ENCODE measurements at regions of chr1 and their contacts with region 1.

Region 1: GRCh38 chr1:205430696-205431305 is 8.9 kb upstream of the LEMD1 start:
- DNase-seq: peak; percentile 75
- H3K4me3 Mint-ChIP-seq: peak overlapping the region; percentile 78
- H3K27ac Mint-ChIP-seq: no peak overlapping the region
- H3K4me1 Mint-ChIP-seq: peaks cover 9% of the 10 kb centered on the region
- H3K27me3 Mint-ChIP-seq: no peaks in the 10 kb centered on the region

Region 2: DNA sequence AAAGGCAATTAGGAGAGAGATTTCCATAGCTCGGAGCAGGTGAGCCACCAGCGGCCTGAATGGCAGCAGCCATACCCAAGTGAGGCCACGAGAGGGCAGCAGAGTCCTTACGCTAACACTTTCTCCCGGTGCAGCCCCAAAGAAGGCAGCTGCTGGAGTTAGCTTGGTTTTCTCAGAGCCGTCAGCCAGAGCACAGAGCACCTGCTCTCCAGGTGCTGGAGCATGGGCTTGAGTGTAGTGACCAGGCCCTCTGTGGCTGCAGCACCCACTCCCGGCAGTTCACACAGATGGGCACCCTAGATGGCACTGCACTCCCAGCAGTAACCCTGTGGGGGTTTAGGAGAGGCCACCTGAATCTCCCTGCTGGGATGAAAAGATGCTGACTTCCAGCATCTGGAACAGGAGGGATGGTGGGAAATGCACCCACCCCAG is 157.2 kb before region 1 on chr1:
- CTCF ChIA-PET with region 1: no interaction called
- intact Hi-C with region 1: loop called (anchors 5 kb)
- DNase-seq: peak; percentile 94
- H3K4me3 Mint-ChIP-seq: no peak overlapping the region
- H3K27ac Mint-ChIP-seq: peak overlapping the region; percentile 27
- H3K4me1 Mint-ChIP-seq: peaks cover 51% of the 10 kb centered on the region
- H3K27me3 Mint-ChIP-seq: no peaks in the 10 kb centered on the region

Region 3: GRCh38 chr1:205335643-205336091 is 95.1 kb before region 1 on chr1:
- CTCF ChIA-PET with region 1: interaction called, 5 read pairs
- intact Hi-C with region 1: loop called (anchors 1 kb)
- DNase-seq: peak; percentile 92
- H3K4me3 Mint-ChIP-seq: no peak overlapping the region
- H3K27ac Mint-ChIP-seq: no peak overlapping the region
- H3K4me1 Mint-ChIP-seq: no peaks in the 10 kb centered on the region
- H3K27me3 Mint-ChIP-seq: no peaks in the 10 kb centered on the region

Region 4: GRCh38 chr1:205354259-205354904 is 76.4 kb before region 1 on chr1:
- CTCF ChIA-PET with region 1: interaction called, 12 read pairs
- intact Hi-C with region 1: no loop called
- DNase-seq: peak; percentile 82
- H3K4me3 Mint-ChIP-seq: no peak overlapping the region
- H3K27ac Mint-ChIP-seq: no peak overlapping the region
- H3K4me1 Mint-ChIP-seq: no peaks in the 10 kb centered on the region
- H3K27me3 Mint-ChIP-seq: no peaks in the 10 kb centered on the region

Region 5: GRCh38 chr1:205396967-205397616 is 33.7 kb before region 1 on chr1:
- CTCF ChIA-PET with region 1: interaction called, 7 read pairs
- intact Hi-C with region 1: loop called (anchors 1 kb)
- DNase-seq: peak; percentile 43
- H3K4me3 Mint-ChIP-seq: no peak overlapping the region
- H3K27ac Mint-ChIP-seq: no peak overlapping the region
- H3K4me1 Mint-ChIP-seq: no peaks in the 10 kb centered on the region
- H3K27me3 Mint-ChIP-seq: peaks cover 10% of the 10 kb centered on the region

Region 6: GRCh38 chr1:205472737-205473441 is 42.1 kb after region 1 on chr1:
- CTCF ChIA-PET with region 1: interaction called, 11 read pairs
- intact Hi-C with region 1: no loop called
- DNase-seq: no peak
- H3K4me3 Mint-ChIP-seq: no peak overlapping the region
- H3K27ac Mint-ChIP-seq: no peak overlapping the region
- H3K4me1 Mint-ChIP-seq: no peaks in the 10 kb centered on the region
- H3K27me3 Mint-ChIP-seq: peaks cover 37% of the 10 kb centered on the region

Region 7: GRCh38 chr1:205480349-205480985 is 49.7 kb after region 1 on chr1:
- CTCF ChIA-PET with region 1: interaction called, 18 read pairs
- intact Hi-C with region 1: no loop called
- DNase-seq: peak; percentile 83
- H3K4me3 Mint-ChIP-seq: peak overlapping the region; percentile 32
- H3K27ac Mint-ChIP-seq: peak overlapping the region; percentile 10
- H3K4me1 Mint-ChIP-seq: peaks cover 22% of the 10 kb centered on the region
- H3K27me3 Mint-ChIP-seq: peaks cover 42% of the 10 kb centered on the region

Region 8: DNA sequence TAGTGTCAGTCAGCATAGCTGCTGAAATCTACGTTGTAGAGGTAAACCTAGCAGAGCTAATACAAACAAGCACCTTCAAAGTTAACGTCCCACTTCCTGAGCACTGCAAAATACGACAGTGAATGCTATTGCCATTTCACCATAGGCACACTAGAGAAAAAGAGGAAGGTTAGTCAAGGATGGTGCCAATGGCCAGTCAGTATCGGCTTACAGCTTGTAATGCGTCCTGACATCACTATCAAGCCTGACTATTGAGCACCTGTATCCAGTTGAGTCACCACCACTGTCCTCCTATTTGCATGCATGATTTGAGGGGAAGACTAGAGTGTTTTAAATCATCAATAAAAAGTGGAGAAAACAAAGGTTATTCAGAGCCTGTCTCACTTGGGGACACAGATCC is 284.8 kb after region 1 on chr1:
- CTCF ChIA-PET with region 1: no interaction called
- intact Hi-C with region 1: no loop called
- DNase-seq: no peak
- H3K4me3 Mint-ChIP-seq: no peak overlapping the region
- H3K27ac Mint-ChIP-seq: no peak overlapping the region
- H3K4me1 Mint-ChIP-seq: peaks cover 47% of the 10 kb centered on the region
- H3K27me3 Mint-ChIP-seq: no peaks in the 10 kb centered on the region